Astrocyte of the cerebellum (primary cell): ENCODE measurements at regions of chr19 and their contacts with region 1.

Region 1: DNA sequence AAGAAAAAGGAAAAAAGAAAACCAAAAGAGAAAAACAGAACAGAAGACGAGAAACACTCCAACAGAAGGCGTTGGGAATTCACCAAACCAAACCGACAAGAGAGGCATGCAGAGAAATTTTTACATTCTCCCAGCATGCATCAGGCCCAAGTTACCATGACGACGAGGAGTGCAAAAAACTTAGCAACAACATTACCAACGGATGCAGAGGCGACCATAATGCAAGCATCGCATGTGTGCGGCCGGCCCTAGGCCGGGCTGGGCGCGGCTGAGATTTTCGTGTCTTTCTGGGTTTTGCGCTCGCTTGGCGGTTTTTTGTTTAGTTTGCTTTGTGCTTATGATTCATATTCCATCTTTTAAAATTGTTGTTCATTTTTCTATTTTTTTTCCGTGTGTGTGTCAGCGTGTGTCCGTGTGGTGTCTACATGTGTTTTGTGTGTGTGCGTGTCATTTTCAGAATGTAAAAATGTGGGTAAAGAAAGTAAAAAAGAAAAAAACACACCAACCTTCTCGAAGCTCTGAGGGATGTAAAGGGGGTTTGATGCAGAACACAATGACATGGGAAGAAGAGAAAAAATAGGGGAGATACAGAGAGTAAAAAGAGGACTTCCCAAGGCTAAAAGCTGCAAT is 84.9 kb downstream of the PTPRS start:
- DNase-seq: no peak
- H3K4me3 ChIP-seq: no peak overlapping the region
- CTCF ChIP-seq: no peak

Region 2: DNA sequence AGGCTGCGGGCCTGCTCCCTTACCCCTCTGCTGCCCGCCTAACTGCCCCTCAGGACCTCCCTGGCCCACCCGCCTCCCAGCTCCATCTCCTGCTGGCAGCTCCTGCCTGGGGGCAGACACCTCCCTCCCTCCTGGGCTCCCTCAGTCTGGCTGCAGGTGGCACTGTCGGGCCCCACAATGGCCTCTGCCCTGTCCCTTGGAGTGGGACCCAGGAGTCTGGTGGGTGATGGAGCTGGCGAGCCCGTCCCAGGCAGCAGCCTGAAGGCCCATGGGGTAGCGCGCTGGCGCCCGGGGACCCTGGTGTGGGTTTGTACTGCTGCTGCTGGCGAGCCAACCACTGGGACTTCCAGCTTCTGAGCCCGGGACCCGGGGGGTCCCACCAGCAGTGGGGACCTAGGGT is 203.2 kb before region 1 on chr19:
- in situ Hi-C with region 1: loop called (anchors 5 kb)
- DNase-seq: no peak
- H3K4me3 ChIP-seq: no peak overlapping the region
- CTCF ChIP-seq: peak; percentile 11

Region 3: DNA sequence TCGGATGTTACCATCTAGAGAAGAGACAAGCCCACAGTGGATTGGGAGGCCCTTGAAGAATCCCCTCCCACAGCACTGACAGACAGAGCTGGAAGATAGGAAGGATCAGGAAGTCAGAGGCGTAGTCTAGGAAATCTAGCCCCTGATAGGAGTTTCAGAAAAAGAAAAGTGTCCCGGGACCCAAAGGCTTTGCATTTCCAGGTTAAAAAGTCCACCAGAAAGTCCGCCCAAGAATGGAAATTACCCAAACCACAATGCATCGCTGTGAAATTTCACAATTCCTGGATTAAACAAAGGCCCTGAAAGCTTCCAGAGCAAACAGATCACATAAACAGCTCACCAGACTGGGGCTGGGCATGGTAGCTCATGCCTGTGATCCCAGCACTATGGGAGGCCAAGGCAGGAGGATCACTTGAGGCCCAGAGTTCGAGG is 139.9 kb before region 1 on chr19:
- in situ Hi-C with region 1: loop called (anchors 5 kb)
- DNase-seq: peak; percentile 48
- H3K4me3 ChIP-seq: no peak overlapping the region
- CTCF ChIP-seq: no peak